Activated CD4-positive, alpha-beta T cell treated with anti-CD3 and anti-CD28 coated beads for 36 hours (primary cell): ENCODE measurements at regions of chr20 and their contacts with region 1.

Region 1: DNA sequence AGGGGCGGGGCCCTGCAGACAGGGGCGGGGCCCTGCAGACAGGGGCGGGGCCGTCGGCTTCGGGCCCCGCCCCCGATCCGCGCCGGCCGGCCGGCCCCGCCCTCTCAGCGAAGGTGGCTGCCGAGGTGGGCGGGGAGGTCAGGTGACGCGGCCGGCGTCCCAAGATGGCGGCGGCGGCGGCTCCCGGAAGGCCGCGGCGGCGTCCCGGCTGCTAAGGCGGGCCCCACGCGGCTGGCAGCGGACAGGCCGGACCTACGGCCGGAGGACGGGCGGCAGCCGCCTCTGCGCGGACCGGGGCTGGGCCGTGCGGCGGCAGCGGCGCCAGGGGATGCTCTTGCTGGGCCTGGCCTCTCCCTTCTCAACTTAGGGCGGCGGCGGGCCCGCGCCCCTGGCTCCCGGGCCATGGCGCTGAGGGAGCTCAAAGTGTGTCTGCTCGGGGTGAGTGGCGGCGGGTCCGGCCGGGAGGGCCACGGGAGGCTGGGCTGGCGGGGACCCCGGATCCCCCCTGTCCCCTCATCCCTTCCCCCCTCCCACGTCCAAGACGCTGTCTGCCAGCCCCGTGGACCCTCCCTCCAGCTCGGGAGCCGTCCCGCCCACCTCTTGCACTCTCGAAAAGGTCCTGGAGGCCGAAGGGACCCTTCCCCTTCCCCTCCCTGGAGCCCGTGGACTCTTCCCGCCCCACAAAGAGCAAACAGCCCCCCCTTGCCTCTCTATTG is at the start of gene RAB22A:
- DNase-seq: peak; percentile 93
- ATAC-seq: peak; percentile 28
- H3K4me3 Mint-ChIP-seq: peak within 1 kb of the TSS; percentile 89
- H3K27ac Mint-ChIP-seq: peak within 1 kb of the TSS; percentile 90
- H3K4me1 Mint-ChIP-seq: peaks cover 70% of the 10 kb centered on the region
- H3K27me3 Mint-ChIP-seq: no peaks in the 10 kb centered on the region
- total RNA-seq, gene RAB22A: 9.3 TPM

Region 2: DNA sequence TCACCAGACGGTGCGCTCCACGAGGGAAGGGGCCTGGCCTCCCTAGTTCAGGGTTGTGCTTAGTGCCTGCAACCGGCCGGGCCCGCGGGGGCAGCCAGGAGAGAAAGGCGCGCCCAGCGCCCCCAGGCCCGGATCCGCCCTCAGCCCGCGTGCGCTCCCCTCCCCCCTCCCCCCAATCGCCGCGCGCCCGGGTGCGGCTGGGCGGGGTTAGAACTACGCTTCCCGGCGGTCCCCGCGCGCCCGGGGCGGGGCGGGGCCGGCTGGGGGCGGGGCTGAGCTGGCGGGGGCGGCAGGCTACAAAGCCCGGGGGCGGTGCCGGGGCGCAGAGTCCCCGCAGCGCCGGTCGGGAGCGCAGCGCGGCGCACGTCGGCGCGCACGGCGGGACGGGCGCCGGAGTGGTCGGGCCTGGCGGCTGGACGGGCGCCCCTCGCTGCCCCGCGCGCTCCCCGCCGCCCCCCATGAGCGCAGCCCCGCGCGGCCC is 918.6 kb before region 1 on chr20 and contains the start of gene RBM38:
- CTCF ChIA-PET with region 1: no interaction called
- POLR2A ChIA-PET with region 1: no interaction called
- intact Hi-C with region 1: loop called in 1 of 2 experiments (anchors 2 kb)
- DNase-seq: peak; percentile 91
- ATAC-seq: peak; percentile 60
- H3K4me3 Mint-ChIP-seq: peak within 1 kb of the TSS; percentile 83
- H3K27ac Mint-ChIP-seq: peak within 1 kb of the TSS; percentile 97
- H3K4me1 Mint-ChIP-seq: peaks cover 44% of the 10 kb centered on the region
- H3K27me3 Mint-ChIP-seq: no peaks in the 10 kb centered on the region
- total RNA-seq, gene RBM38: 96.5 to 101 TPM

Region 3: DNA sequence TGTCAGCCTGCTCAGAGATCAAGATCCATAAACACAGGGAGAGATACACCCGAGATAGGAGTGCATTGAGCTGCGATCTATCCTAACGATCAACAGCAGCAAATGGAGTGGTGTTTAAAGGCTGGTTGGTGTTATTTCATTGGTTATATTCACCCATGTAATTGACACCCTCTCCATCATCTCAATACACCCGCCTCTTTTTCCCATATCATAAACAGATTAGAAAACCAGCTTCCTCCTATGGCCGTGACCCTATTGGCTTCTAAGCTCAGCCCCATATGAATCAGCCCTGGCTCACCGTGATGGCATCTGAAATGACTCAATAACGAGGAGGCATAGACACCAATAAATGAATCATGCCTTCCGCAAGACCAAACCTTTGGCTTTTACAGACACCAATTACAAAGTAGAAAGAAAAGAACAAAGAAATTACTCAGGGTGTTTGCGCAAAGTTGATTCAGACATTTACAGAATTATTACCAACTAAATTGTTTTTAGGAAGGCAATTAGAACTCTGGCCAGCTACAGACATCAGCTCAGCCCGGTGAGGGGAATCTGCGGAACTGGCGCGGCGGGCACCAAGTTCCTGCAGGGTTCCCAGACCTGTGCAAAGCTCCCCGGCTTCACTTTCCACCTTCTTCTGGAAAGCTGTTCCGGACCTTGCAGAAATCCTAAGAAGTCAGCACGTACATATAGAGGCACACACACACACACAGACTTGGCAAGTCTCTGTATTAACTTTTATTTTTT is 611.4 kb before region 1 on chr20:
- CTCF ChIA-PET with region 1: interaction called, 3 read pairs
- POLR2A ChIA-PET with region 1: no interaction called
- intact Hi-C with region 1: loop called (anchors 5 kb)
- DNase-seq: peak; percentile 89
- ATAC-seq: peak; percentile 99
- H3K4me3 Mint-ChIP-seq: peak overlapping the region; percentile 33
- H3K27ac Mint-ChIP-seq: peak overlapping the region; percentile 77
- H3K4me1 Mint-ChIP-seq: peaks cover 40% of the 10 kb centered on the region
- H3K27me3 Mint-ChIP-seq: no peaks in the 10 kb centered on the region

Region 4: DNA sequence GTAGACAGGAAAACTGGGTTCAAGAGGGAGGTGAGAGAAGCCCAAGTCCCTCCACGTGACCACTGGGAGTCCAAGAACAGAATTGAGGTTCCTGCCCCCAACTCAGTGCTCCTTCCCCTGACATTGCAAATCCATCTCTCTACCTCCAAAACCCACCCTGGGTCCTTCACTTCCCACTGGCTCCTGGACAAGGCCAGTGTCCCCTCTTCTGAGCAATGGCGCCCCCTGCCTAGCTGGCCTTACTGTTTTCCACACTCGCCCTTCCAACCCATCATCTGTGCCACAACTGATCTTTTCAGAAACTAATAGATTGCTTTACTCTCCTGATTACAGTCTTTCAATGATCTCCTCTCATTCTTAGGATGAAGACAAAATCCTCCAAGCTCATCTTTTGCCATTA is 281.6 kb before region 1 on chr20:
- CTCF ChIA-PET with region 1: no interaction called
- POLR2A ChIA-PET with region 1: no interaction called
- intact Hi-C with region 1: no loop called
- DNase-seq: peak; percentile 46
- ATAC-seq: no peak
- H3K4me3 Mint-ChIP-seq: no peak overlapping the region
- H3K27ac Mint-ChIP-seq: no peak overlapping the region
- H3K4me1 Mint-ChIP-seq: no peaks in the 10 kb centered on the region
- H3K27me3 Mint-ChIP-seq: peaks cover 30% of the 10 kb centered on the region

Region 5: GRCh38 chr20:58251921-58252591 is 57.7 kb before region 1 on chr20:
- CTCF ChIA-PET with region 1: no interaction called
- POLR2A ChIA-PET with region 1: no interaction called
- intact Hi-C with region 1: loop called in 1 of 2 experiments (anchors 5 kb)
- DNase-seq: peak; percentile 19
- ATAC-seq: peak; percentile 84
- H3K4me3 Mint-ChIP-seq: no peak overlapping the region
- H3K27ac Mint-ChIP-seq: peak overlapping the region; percentile 39
- H3K4me1 Mint-ChIP-seq: peaks cover 33% of the 10 kb centered on the region
- H3K27me3 Mint-ChIP-seq: no peaks in the 10 kb centered on the region

Region 6: GRCh38 chr20:58366866-58367265 is 57.1 kb after region 1 on chr20:
- CTCF ChIA-PET with region 1: no interaction called
- POLR2A ChIA-PET with region 1: no interaction called
- intact Hi-C with region 1: no loop called
- DNase-seq: no peak
- ATAC-seq: no peak
- H3K4me3 Mint-ChIP-seq: no peak overlapping the region
- H3K27ac Mint-ChIP-seq: no peak overlapping the region
- H3K4me1 Mint-ChIP-seq: peaks cover 5% of the 10 kb centered on the region
- H3K27me3 Mint-ChIP-seq: no peaks in the 10 kb centered on the region

Region 7: DNA sequence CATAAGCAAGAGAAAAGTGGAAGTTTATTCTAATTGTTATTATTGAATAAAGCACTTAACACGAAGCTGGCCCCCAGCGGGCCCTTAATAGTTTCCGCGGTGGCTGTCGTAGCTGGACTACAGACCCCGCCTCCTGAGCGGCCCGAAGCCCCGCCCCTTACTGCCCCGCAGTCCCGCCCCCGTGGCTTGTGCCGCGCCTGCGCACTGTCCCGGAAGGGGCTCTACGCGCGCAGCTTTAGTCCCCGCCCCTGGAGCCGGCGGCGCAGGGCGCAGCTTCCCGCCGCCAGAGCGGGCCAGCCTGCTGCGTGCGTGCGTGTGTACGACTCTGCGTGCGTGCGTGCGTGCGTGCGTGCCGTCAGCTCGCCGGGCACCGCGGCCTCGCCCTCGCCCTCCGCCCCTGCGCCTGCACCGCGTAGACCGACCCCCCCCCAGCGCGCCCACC is 79.2 kb after region 1 on chr20 and contains the start of gene VAPB:
- CTCF ChIA-PET with region 1: no interaction called
- POLR2A ChIA-PET with region 1: interaction called, 14 read pairs
- intact Hi-C with region 1: loop called (anchors 1 kb)
- DNase-seq: peak; percentile 98
- ATAC-seq: peak; percentile 99
- H3K4me3 Mint-ChIP-seq: peak within 1 kb of the TSS; percentile 100
- H3K27ac Mint-ChIP-seq: peak within 1 kb of the TSS; percentile 97
- H3K4me1 Mint-ChIP-seq: peaks cover 39% of the 10 kb centered on the region
- H3K27me3 Mint-ChIP-seq: peaks cover 2% of the 10 kb centered on the region
- total RNA-seq, gene VAPB: 43.9 to 54.5 TPM

Region 8: DNA sequence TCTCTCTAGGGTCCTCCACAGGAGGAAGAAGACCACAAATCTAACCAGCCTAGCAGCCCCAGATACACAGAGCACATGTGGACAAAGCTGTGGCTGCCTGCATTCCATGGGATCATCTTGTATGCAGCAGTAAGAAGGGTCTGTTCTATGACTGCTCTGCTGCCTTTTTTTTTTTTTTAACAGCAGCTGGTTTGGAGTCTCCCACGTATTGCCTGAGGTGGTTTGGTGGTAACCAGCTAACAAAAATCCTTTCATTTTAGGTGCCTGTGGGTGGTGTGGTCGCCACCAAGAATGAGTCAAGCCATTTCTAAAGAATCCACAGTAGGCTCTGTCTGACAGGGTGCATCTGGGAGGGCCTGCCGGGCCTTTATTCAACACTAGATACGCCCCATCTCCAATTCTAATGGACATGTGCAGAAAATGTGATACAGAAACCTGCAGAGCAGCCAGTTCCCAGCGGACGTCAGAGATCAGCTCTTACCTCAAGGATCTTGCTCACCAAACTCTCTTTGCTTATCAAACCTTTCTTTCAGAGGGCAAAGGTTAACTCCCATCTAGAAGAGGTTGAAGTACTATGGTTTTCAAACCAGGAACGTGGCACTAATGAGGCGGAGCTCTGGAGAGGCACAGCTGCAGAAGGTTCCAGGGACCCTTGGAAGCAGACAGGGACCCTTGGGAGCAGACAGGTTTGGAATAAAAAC is 509.0 kb after region 1 on chr20:
- CTCF ChIA-PET with region 1: no interaction called
- POLR2A ChIA-PET with region 1: no interaction called
- intact Hi-C with region 1: loop called in 1 of 2 experiments (anchors 2 kb)
- DNase-seq: peak; percentile 91
- ATAC-seq: peak; percentile 97
- H3K4me3 Mint-ChIP-seq: no peak overlapping the region
- H3K27ac Mint-ChIP-seq: no peak overlapping the region
- H3K4me1 Mint-ChIP-seq: peaks cover 16% of the 10 kb centered on the region
- H3K27me3 Mint-ChIP-seq: peaks cover 24% of the 10 kb centered on the region

Region 9: GRCh38 chr20:59032023-59032712 is 722.4 kb after region 1 on chr20 and contains the start of gene ATP5F1E:
- CTCF ChIA-PET with region 1: no interaction called
- POLR2A ChIA-PET with region 1: no interaction called
- intact Hi-C with region 1: loop called in 1 of 2 experiments (anchors 1 kb)
- DNase-seq: peak; percentile 98
- ATAC-seq: peak; percentile 95
- H3K4me3 Mint-ChIP-seq: peak within 1 kb of the TSS; percentile 87
- H3K27ac Mint-ChIP-seq: peak within 1 kb of the TSS; percentile 96
- H3K4me1 Mint-ChIP-seq: peaks cover 73% of the 10 kb centered on the region
- H3K27me3 Mint-ChIP-seq: no peaks in the 10 kb centered on the region
- total RNA-seq, gene ATP5F1E: 63.5 to 76.1 TPM